Heart left ventricle (tissue), 16 donors: ENCODE measurements at regions of chr3 and their contacts with region 1.

Region 1: DNA sequence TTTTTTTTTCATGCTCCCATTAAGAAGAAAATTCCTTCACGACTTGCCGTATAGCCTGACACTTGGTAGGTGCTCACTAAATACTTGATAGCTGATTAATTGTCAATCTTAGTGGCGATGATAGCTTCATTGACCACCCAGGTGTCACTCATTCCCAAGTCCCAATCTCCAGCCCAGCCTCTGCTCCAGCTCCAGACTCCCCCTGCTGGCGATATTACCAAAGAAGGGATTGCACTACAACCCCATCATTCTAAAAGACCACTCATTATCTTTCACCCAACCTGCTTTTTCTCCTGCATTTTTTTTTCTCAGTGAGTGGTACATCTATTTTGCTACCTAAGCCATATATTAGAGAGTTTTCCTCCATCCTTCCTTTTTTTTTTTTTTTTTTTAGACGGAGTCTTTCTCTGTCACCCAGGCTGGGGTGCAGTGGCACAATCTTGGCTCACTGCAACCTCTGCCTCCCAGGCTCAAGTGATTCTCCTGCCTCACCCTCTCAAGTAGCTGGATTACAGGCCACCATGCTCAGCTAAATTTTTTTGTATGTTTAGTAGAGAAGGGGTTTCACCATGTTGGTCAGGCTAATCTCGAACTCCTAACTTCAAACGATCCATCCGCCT is 19.5 kb upstream of the COMMD2 start:
- DNase-seq: peak in 4 of 5 donors; percentile 33 to 45 (median 36)
- ATAC-seq: peak in 2 of 4 donors; percentile 44 to 65
- H3K4me3 ChIP-seq: no peak overlapping the region
- H3K27ac ChIP-seq: no peak overlapping the region
- H3K4me1 ChIP-seq: no peaks in the 10 kb centered on the region
- H3K27me3 ChIP-seq: no peaks in the 10 kb centered on the region
- CTCF ChIP-seq: peak; percentile 53 to 83 (median 72)
- POLR2A ChIP-seq: no peak

Region 2: GRCh38 chr3:149114458-149114857 is 657.3 kb before region 1 on chr3:
- intact Hi-C with region 1: loop called in 1 of 10 experiments (anchors 10 kb)
- DNase-seq: no peak
- ATAC-seq: peak in 1 of 4 donors; percentile 65
- H3K4me3 ChIP-seq: no peak overlapping the region
- H3K27ac ChIP-seq: no peak overlapping the region
- H3K4me1 ChIP-seq: peaks cover 0 to 10% (median 0%) of the 10 kb centered on the region in 12 donors
- H3K27me3 ChIP-seq: no peaks in the 10 kb centered on the region
- CTCF ChIP-seq: no peak
- POLR2A ChIP-seq: no peak

Region 3: GRCh38 chr3:149494022-149494758 is 277.6 kb before region 1 on chr3:
- intact Hi-C with region 1: loop called in 6 of 10 experiments (anchors 1 to 5 kb)
- DNase-seq: peak in 4 of 5 donors; percentile 55 to 62 (median 56)
- ATAC-seq: peak in 3 of 4 donors; percentile 58 to 80 (median 65)
- H3K4me3 ChIP-seq: no peak overlapping the region
- H3K27ac ChIP-seq: no peak overlapping the region
- H3K4me1 ChIP-seq: peaks cover 0 to 3% (median 0%) of the 10 kb centered on the region in 12 donors
- H3K27me3 ChIP-seq: peaks cover 0 to 6% (median 0%) of the 10 kb centered on the region in 9 donors
- CTCF ChIP-seq: peak; percentile 70 to 88 (median 80)
- POLR2A ChIP-seq: no peak

Region 4: DNA sequence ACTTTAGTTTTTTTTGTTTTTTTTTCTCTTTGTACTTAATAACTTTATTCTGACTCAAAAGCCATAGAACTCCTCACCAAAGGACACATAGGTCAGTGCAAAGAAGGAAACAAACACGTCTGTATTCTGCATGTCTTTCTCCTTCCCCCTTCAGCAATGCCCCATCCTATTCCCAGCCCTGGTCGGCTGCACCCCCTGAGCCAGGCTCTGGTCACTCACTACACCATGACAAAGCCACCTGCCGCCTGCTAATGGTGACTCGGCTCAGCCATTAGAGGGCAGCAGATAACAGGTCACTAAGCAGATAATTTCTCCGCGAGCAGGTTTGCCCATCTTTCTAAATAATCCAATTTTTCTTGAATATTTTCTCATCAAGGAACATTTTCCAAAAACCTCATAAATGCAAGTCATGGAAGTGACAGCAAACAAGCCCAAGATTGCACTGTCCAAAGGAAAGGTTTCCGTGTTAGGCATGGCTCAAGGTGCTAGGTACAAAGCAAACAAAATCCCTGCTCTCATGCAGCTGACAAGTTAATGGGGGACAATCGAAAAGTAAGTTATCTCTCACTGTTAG is 259.5 kb before region 1 on chr3:
- intact Hi-C with region 1: loop called in 9 of 10 experiments (anchors 1 to 10 kb)
- DNase-seq: peak; percentile 58 to 68 (median 61)
- ATAC-seq: peak; percentile 70 to 88 (median 79)
- H3K4me3 ChIP-seq: no peak overlapping the region
- H3K27ac ChIP-seq: no peak overlapping the region
- H3K4me1 ChIP-seq: peaks cover 0 to 24% (median 4%) of the 10 kb centered on the region in 12 donors
- H3K27me3 ChIP-seq: no peaks in the 10 kb centered on the region
- CTCF ChIP-seq: peak; percentile 70 to 92 (median 84)
- POLR2A ChIP-seq: no peak

Region 5: GRCh38 chr3:149536429-149536828 is 235.3 kb before region 1 on chr3:
- intact Hi-C with region 1: loop called in 1 of 10 experiments (anchors 5 kb)
- DNase-seq: peak; percentile 75 to 86 (median 80)
- ATAC-seq: peak; percentile 82 to 85 (median 84)
- H3K4me3 ChIP-seq: no peak overlapping the region
- H3K27ac ChIP-seq: peak overlapping the region in 5 of 12 donors; percentile 7 to 63 (median 20)
- H3K4me1 ChIP-seq: peaks cover 0 to 73% (median 43%) of the 10 kb centered on the region in 12 donors
- H3K27me3 ChIP-seq: no peaks in the 10 kb centered on the region
- CTCF ChIP-seq: no peak
- POLR2A ChIP-seq: no peak

Region 6: DNA sequence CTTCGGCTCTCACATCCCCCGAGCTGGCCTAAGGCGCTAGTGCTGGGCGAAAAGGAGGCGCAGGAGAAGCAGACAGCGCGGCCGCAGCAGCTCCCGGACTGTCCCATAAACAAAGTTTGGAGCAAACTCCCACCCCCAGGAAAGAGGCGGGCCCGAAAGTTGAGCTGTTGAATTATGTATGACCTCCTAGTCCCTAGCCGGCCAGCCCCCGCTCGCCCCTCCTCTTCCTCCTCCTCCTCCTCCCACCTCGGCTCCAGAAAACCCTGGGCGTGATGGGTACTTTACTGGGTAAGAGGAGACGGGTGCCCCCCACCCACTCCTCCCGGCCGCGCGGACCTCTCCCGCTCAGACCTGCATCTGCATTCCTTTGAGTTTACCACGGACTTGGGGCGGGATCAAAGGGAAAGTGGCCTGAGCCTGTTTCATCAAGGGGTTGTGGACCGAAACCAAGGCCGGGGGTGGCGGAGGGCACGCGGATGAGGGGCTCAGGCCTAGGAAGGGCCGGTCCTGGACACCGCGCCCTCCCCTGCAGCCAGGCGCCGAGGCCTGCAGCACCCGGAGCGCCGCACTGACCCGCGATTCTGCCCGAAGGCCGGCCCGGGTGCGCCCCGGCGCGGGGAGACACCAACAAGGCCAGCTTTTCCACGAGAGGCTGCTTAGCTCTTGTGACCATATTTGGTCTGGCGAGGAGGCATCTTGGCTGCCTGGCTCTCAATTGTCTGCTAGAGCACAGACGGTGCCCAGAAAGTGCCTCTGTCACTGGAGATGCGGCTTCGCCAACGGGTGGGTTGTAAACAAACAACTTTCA is 113.6 kb before region 1 on chr3 and contains the start of gene WWTR1:
- intact Hi-C with region 1: no loop called
- DNase-seq: peak; percentile 93 to 97 (median 96)
- ATAC-seq: peak; percentile 87 to 95 (median 90)
- H3K4me3 ChIP-seq: peak within 1 kb of the TSS; percentile 49 to 94 (median 78)
- H3K27ac ChIP-seq: peak within 1 kb of the TSS; percentile 89 to 100 (median 98)
- H3K4me1 ChIP-seq: peaks cover 0 to 46% (median 30%) of the 10 kb centered on the region in 12 donors
- H3K27me3 ChIP-seq: peaks cover 0 to 36% (median 0%) of the 10 kb centered on the region in 9 donors
- CTCF ChIP-seq: peak in 9 of 12 donors; percentile 8 to 60 (median 39)
- POLR2A ChIP-seq: peak; percentile 56 to 99
- total RNA-seq, gene WWTR1: 32.5 to 71.7 (median 41.2) TPM

Region 7: DNA sequence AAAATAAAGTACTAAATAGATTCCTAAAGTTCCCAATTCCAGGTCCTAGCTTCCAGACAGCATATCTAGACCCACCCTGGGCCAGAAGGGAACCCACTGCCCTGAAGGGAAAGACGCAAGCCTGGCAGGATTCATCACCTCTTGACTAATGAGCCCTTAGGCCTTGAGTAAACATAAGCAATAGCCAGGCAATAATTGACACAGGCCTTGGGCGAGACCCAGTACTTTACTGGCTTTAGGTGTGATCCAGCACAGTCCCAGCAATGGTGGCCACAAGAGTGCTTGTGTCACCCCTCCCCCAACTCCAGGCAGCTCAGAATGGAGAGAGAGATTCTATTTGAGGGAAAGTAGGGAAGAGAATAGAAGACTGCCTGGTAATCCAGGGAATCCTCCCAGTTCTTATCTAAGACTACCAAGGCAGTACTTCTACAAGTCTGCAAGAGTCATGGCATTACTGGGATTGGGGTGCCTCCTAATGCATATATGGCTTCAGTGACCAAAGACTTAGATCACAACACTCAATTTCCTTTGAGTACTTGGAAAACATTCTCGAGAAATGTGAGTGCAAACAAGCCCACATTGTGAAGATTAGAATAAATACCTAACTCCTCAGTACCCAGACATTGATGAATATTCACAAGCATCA is 83.5 kb before region 1 on chr3:
- intact Hi-C with region 1: no loop called
- DNase-seq: no peak
- ATAC-seq: no peak
- H3K4me3 ChIP-seq: no peak overlapping the region
- H3K27ac ChIP-seq: no peak overlapping the region
- H3K4me1 ChIP-seq: no peaks in the 10 kb centered on the region
- H3K27me3 ChIP-seq: no peaks in the 10 kb centered on the region
- CTCF ChIP-seq: no peak
- POLR2A ChIP-seq: no peak